ENCODE measurements at regions of chr17 and their contacts with region 1.

Region 1: DNA sequence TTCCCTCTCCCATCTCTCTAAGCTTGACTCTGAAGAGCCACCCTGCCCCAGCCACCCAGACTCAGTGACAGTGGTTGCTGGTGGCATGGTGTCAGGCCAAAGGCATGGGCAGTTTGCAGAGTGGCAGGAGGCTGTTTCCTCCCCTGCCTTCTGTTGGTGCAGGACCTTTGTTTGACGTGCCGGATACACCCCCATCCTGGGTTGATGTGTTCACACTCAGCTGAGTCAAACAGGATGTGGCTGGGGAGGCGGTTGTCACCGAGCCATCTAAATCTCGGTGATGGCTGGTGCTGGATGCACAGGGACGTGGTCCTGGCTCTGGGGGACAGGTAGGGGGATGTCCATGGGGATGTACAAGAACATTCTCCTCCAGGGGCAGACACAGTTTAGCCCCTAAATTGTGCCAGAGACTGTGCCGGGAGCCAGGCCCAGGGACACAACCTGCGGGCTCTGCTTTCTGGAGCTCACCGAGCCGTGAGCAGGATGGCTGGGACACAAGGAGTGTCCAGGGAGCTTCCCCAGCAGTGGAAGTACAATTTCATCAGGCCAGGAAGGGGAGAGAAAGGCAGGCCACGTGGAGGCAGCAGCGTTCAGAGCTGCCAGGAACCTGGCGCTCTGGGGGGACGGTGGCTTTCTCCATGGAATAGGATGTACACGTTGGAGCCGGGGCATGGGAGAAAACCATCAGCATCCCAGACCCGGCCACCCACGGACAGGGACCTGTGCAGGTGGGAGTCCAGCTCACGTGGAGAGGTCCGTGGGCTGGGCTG is 264.2 kb downstream of the SEC14L1 start:
- DNase-seq: peak; percentile 94
- ATAC-seq: peak; percentile 75
- H3K4me3 Mint-ChIP-seq: peak overlapping the region; percentile 92
- H3K27ac Mint-ChIP-seq: peak overlapping the region; percentile 89
- H3K4me1 Mint-ChIP-seq: peaks cover 97% of the 10 kb centered on the region
- H3K27me3 Mint-ChIP-seq: no peaks in the 10 kb centered on the region

Region 2: DNA sequence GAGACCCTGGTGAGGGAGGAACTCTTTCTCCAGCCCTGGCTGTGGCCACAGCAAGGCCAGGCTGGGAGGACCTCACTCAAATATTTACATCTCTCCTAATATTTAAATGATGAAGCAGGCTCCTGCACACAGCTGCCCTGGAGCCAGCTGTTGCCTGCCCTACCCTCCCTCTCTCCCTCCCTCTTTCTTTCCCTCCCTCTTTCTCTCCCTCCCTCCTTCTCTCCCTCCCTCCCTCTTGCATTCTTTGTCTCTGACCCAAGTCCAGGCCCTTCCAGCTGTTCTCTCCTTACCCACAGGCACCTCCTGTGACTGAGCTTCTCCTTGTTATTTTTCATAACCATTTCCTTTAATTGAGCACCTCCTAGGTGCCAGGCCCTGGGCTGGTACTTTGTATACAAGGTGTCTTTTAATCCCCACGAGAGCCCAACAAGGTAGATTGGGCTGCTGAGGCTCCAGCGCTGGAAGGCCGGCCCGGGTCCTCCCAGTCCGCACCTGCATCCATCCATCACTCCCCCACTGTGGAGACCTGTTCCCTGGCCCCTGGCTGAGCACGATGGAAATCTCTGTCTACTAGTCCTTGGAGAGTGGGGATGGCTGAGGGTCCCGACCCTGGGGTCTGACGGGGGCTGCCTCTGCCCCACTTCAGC is 21.9 kb before region 1 on chr17:
- CTCF ChIA-PET with region 1: interaction called, 73 read pairs
- POLR2A ChIA-PET with region 1: interaction called, 4 read pairs
- DNase-seq: no peak
- ATAC-seq: peak; percentile 20
- H3K4me3 Mint-ChIP-seq: peak overlapping the region; percentile 76
- H3K27ac Mint-ChIP-seq: peak overlapping the region; percentile 91
- H3K4me1 Mint-ChIP-seq: peaks cover 93% of the 10 kb centered on the region
- H3K27me3 Mint-ChIP-seq: no peaks in the 10 kb centered on the region

Region 3: GRCh38 chr17:77429919-77430752 is 25.1 kb after region 1 on chr17:
- CTCF ChIA-PET with region 1: interaction called, 149 read pairs
- POLR2A ChIA-PET with region 1: interaction called, 11 read pairs
- DNase-seq: peak; percentile 87
- ATAC-seq: peak; percentile 24
- H3K4me3 Mint-ChIP-seq: no peak overlapping the region
- H3K27ac Mint-ChIP-seq: peak overlapping the region; percentile 57
- H3K4me1 Mint-ChIP-seq: peaks cover 96% of the 10 kb centered on the region
- H3K27me3 Mint-ChIP-seq: no peaks in the 10 kb centered on the region

Region 4: GRCh38 chr17:77451245-77451893 is 46.4 kb after region 1 on chr17:
- CTCF ChIA-PET with region 1: interaction called, 28 read pairs
- POLR2A ChIA-PET with region 1: interaction called, 7 read pairs
- DNase-seq: peak; percentile 82
- ATAC-seq: peak; percentile 62
- H3K4me3 Mint-ChIP-seq: peak overlapping the region; percentile 85
- H3K27ac Mint-ChIP-seq: peak overlapping the region; percentile 93
- H3K4me1 Mint-ChIP-seq: peaks cover 64% of the 10 kb centered on the region
- H3K27me3 Mint-ChIP-seq: no peaks in the 10 kb centered on the region

Region 5: DNA sequence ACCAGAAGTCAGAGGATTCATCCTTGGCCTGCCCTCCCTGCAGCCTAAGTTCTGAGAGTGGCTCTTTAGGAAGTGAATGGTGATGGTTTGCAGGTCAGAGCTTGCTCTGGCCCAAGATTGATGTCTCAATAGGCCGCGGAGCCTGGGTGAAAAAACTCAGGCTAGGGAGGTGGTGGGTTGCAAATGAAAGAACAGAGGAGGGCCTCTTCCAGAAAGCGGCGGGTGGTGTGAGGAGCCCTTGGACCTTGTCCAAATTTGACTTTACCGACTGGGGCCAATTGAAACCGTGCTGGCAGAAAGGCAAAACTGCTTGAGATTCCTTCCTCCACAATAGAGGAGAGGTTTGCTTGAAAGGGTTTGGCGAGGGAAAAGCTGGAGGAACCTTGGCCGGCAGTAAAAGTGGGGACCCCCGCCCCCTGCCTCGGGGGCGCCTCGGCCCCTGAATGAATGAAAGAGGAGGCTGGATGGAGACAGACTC is 67.0 kb after region 1 on chr17:
- CTCF ChIA-PET with region 1: interaction called, 15 read pairs
- POLR2A ChIA-PET with region 1: interaction called, 3 read pairs
- DNase-seq: no peak
- ATAC-seq: no peak
- H3K4me3 Mint-ChIP-seq: peak overlapping the region; percentile 26
- H3K27ac Mint-ChIP-seq: peak overlapping the region; percentile 60
- H3K4me1 Mint-ChIP-seq: peaks cover 97% of the 10 kb centered on the region
- H3K27me3 Mint-ChIP-seq: no peaks in the 10 kb centered on the region

Region 6: DNA sequence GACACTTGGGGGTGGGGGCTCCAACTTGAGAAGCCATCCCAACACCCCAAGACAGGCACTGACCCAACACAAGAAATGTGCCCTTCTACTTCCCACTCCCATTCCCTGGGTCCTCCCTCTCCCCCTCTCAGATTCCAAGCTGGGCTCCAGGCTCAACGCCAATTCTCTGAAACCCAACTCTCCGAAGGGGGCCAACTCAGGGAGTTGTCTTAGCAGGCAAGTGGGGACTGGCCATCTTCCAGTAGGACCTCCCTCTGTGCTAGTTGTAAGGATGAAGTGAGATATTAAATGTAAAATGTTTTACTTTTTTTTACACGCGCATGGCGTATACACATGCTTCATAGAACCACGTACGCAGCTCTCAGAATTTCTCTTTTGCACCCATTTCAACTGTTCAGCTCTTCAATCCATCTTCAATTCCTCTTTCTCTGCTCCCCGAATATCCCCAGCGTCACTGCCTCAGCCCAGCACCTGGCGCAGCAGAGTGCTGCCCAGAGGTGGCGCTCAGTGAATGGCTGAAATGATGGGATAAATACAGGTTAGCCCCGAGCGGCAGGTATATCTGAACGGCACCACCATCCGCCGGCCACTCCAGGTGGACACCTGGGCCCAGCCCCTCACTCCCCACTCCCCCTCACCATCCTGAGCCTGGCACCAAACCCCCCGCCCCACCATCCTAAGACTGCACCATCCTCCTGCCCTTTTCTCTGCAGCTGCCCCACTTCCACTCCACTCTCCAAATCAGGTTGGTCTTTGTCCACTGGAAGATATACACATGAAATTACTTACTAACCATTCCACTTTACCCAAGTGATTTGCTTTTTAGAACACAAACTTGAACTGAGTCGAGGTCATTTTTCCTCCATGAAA is 509.6 kb after region 1 on chr17:
- CTCF ChIA-PET with region 1: no interaction called
- POLR2A ChIA-PET with region 1: no interaction called
- DNase-seq: no peak
- ATAC-seq: no peak
- H3K4me3 Mint-ChIP-seq: no peak overlapping the region
- H3K27ac Mint-ChIP-seq: no peak overlapping the region
- H3K4me1 Mint-ChIP-seq: peaks cover 7% of the 10 kb centered on the region
- H3K27me3 Mint-ChIP-seq: peaks cover 66% of the 10 kb centered on the region

Measured in activated CD8-positive, alpha-beta T cell treated with anti-CD3 and anti-CD28 coated beads, Interleukin-2, amount 10 ng/mL, durations not matched to agents 7 days and 5 days (primary cell).